Right ventricle myocardium inferior (tissue), 1 donor: ENCODE measurements at regions of chrX and their contacts with region 1.

Region 1: GRCh38 chrX:38985375-38985774 is 184.1 kb downstream of the MID1IP1 start:
- DNase-seq: no peak
- ATAC-seq: no peak

Region 2: DNA sequence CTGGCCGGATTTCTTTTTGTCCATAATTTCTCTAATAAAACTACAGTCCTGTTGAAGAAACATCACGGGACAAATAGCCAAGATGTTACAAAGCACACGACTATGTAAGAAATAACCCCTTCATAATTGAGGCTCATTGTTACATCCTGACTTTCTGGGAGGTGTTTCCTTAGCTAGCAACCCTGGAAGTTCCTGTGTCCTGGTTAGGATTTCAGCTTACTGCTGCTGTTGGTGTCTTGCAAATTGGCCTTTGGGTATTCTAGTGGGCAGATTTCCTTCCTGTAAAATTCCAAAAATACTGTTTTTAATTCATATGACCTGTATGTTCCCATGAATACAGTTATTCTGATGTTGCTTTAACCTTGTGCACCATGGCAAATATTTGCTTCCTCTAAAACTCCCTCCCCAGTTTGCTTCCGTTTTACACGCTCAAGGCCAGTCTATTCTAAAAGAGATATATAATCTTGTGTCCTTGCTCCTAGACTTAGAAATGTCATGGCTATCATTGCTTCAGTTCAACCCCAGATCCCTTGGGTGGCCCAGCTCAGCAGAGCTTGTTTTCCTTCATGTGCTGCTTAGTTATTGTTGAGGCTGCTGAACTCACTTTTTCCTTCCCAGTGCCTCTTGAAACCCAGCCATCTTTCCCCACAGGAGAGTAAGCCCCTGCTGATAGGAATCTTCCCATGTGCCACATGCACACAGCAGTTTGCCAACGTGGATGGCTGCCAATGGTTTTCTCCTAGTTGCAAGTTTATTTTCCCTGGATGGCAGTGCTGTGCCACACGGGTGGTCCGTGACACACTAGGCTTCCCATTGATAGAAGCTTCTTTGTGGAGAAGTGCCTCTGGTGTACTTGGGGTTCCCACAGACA is 348.2 kb before region 1 on chrX:
- intact Hi-C with region 1: no loop called
- DNase-seq: no peak
- ATAC-seq: no peak

Region 3: DNA sequence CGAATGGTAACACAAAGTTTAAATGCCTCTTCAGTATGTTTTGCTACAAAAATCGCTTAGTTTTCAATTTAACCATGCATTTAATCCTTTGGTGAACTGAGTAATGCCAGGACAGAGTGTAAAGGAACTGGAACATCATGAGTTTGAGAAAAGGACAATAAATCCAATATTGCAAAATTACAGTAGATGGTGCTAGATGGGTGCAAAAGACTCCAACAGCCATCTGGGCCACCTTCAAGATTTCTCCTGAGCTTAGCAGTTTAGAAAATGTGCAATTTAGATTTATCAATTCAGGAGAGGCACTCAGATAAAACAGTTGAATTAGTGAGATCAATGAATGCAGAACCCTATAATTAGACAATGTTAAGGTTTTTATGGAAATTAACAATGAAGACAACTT is 217.3 kb before region 1 on chrX:
- intact Hi-C with region 1: loop called (anchors 5 kb)
- DNase-seq: no peak
- ATAC-seq: no peak

Region 4: GRCh38 chrX:39039890-39040289 is 54.5 kb after region 1 on chrX:
- intact Hi-C with region 1: no loop called
- DNase-seq: no peak
- ATAC-seq: no peak

Region 5: DNA sequence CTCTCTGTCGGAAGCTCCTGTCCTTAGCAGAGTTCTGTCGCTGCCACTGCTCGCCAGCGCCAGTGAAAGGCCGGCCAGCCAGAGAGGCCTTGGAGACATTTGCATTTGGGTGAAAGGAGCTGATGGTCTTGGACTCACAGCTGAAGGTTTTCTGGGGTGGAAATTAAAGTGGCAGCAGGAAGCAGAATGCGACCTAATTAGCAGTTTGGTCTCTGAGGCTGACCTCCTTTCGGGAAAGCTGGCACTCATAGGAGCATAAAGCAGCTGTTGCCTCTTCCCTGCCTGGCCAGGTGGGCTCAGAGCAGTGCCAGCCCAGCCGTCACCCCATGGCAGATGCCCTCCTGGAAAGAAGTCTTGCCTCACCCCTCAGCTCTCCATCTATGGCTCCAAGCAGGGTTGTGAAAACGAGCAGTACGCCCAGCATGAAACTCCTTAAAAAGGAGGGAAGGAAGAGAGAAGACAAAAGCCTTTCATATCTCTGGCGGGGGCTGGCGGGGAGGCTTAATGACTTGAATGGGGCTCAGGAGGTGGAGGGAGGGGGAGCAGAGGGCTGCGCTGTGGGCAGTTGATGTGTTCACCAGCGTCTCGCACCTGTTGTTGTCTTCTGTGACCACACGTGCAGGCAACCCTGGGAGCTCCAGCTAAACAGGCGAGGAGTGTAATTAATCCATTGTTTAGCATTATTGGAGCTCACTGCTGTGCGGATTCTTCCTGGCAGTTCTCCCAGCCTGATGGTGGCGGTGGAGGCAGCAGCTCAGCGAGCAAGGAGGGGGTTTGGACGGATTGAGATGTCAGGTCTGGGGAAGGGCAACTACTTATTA is 79.9 kb after region 1 on chrX:
- intact Hi-C with region 1: no loop called
- DNase-seq: no peak
- ATAC-seq: no peak

Region 6: GRCh38 chrX:39149761-39150160 is 164.4 kb after region 1 on chrX:
- intact Hi-C with region 1: loop called (anchors 10 kb)
- DNase-seq: peak; percentile 90
- ATAC-seq: peak; percentile 76

Region 7: DNA sequence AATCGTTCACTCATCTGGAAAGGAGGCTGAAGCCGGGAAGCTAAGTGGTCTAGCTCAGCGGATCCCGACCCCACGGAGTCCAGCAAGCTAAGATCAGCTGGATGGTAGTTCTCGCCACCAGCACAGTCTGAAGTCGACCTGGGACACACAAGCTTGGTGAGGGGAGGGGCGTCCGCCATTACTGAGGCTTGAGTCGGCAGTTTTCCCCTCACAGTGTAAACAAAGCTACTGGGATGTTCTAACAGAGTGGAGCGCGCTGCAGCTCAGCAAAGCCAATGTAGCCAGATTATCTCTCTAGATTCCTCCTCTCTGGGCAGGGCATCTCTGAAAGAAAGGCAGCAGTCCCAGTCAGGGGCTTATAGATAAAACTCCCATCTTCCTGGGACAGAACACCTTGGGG is 556.9 kb after region 1 on chrX:
- intact Hi-C with region 1: no loop called
- DNase-seq: no peak
- ATAC-seq: no peak